Activated CD8-positive, alpha-beta T cell treated with anti-CD3 and anti-CD28 coated beads, Interleukin-2, amount 10 ng/mL, durations not matched to agents 7 days and 5 days (primary cell): ENCODE measurements at regions of chr16 and their contacts with region 1.

Region 1: GRCh38 chr16:2003827-2004641 is 5.6 kb downstream of the ZNF598 start:
- DNase-seq: peak; percentile 91
- ATAC-seq: peak; percentile 92
- H3K4me3 Mint-ChIP-seq: no peak overlapping the region
- H3K27ac Mint-ChIP-seq: no peak overlapping the region
- H3K4me1 Mint-ChIP-seq: peaks cover 35% of the 10 kb centered on the region
- H3K27me3 Mint-ChIP-seq: no peaks in the 10 kb centered on the region

Region 2: GRCh38 chr16:1983544-1984346 is 20.3 kb before region 1 on chr16 and contains the start of gene GFER:
- CTCF ChIA-PET with region 1: interaction called, 13 read pairs
- POLR2A ChIA-PET with region 1: interaction called, 3 read pairs
- DNase-seq: peak; percentile 80
- ATAC-seq: peak; percentile 88
- H3K4me3 Mint-ChIP-seq: peak within 1 kb of the TSS; percentile 80
- H3K27ac Mint-ChIP-seq: peak within 1 kb of the TSS; percentile 32
- H3K4me1 Mint-ChIP-seq: peaks cover 27% of the 10 kb centered on the region
- H3K27me3 Mint-ChIP-seq: peaks cover 31% of the 10 kb centered on the region
- total RNA-seq, gene GFER: 27.2 to 30.5 TPM

Region 3: GRCh38 chr16:1991948-1992703 is 11.9 kb before region 1 on chr16:
- CTCF ChIA-PET with region 1: interaction called, 21 read pairs
- POLR2A ChIA-PET with region 1: interaction called, 5 read pairs
- DNase-seq: peak; percentile 97
- ATAC-seq: peak; percentile 78
- H3K4me3 Mint-ChIP-seq: peak overlapping the region; percentile 69
- H3K27ac Mint-ChIP-seq: no peak overlapping the region
- H3K4me1 Mint-ChIP-seq: peaks cover 30% of the 10 kb centered on the region
- H3K27me3 Mint-ChIP-seq: peaks cover 10% of the 10 kb centered on the region

Region 4: DNA sequence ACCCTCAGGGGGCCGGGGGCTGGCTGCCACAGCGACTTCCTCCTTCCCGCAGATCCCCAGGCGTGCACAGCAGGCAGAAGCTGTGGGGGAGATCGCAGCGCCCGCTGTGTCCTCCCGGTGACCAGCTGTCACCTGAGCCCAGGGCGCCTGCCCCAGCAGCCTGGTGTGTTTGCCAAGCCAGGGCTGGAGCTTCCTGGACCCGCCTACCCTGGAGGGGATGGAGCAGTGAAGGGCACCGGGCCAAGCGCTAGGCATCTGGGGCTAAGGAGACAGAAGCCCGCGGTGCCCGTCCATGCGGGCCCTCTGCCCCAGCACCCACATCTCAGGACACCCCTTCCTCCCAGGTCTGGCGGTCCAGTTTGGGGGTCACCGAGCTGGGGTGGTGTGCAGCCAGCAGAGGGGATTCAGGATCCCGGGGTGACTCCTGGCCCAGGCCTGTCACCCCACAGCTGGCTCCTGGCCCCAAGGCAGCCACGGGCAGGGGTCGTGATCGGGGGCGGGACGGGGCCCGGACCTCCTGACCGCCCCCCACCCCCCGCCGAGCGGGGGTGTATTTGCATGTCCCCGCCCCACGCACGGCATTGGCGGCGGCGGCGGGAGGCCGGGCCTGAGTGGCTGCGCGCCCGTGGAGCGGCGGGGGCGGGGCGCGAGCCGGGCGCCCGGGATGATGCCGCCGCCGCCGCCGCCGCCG is 144.1 kb after region 1 on chr16 and contains the start of gene RAB26:
- CTCF ChIA-PET with region 1: interaction called, 13 read pairs
- POLR2A ChIA-PET with region 1: no interaction called
- DNase-seq: peak; percentile 50
- ATAC-seq: peak; percentile 54
- H3K4me3 Mint-ChIP-seq: peak within 1 kb of the TSS; percentile 28
- H3K27ac Mint-ChIP-seq: no peak within 1 kb of the TSS
- H3K4me1 Mint-ChIP-seq: peaks cover 32% of the 10 kb centered on the region
- H3K27me3 Mint-ChIP-seq: no peaks in the 10 kb centered on the region
- total RNA-seq, gene RAB26: 0.26 to 0.31 TPM